Lower leg skin (tissue), 4 donors: ENCODE measurements at regions of chr6 and their contacts with region 1.

Region 1: DNA sequence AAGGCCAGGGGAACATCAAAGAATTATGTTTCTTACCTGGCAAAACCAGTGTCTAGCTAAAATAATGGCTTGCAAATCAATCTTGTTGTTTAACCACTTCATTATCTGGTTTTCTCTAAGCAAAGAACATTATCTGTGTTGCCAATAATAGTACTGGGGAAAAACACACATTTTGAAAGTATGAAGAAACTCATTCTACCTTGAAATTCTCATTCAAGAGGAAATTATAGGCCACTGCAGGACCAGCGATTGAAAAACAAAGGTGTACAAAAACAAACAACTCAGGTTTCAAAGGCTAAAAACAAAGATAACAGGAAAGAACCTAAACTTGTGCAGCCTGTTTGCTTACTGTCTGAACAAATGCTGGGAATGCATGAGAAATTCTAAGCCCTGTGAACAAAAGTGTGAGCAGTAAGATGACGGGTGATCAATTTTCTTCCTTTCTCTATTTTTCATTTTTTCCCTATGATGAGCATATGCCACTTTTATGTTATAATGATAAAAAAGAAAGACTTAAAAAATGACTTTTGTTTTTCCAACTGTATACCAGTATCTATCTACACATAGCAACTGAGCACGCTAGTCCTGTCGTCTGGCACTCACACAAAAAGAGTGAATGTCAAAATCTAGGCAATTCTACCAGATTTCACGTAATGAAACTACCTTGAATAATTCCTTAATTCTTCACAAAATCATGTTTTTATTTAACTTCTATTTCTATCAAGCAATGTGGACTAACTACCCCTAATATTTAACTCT is 117.9 kb downstream of the SGK1 start:
- DNase-seq: no peak
- H3K4me3 ChIP-seq: no peak overlapping the region
- CTCF ChIP-seq: no peak
- POLR2A ChIP-seq: no peak

Region 2: DNA sequence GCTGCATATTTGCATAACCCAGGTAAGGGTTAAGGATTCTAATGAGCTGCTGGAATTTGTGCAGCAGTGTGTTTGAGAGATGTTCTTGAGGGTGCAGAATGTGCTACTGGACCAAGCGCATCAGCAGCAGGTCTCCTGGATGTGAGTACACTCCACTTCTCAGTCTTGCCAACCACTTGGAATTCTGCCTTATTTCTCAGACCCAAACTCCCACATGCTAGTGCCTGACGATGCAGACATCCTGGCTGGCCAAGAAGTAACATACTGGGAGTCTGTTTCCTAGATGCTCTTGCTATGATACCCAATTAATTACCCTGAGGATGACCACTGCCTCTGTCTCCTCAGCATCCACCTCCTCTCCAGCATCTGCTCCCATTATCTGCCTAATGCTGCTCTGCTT is 1985.3 kb before region 1 on chr6:
- intact Hi-C with region 1: loop called (anchors 5 kb)
- DNase-seq: no peak
- H3K4me3 ChIP-seq: no peak overlapping the region
- CTCF ChIP-seq: no peak
- POLR2A ChIP-seq: no peak

Region 3: GRCh38 chr6:134537146-134537555 is 337.1 kb after region 1 on chr6:
- intact Hi-C with region 1: no loop called
- DNase-seq: no peak
- H3K4me3 ChIP-seq: no peak overlapping the region
- CTCF ChIP-seq: no peak
- POLR2A ChIP-seq: no peak

Region 4: DNA sequence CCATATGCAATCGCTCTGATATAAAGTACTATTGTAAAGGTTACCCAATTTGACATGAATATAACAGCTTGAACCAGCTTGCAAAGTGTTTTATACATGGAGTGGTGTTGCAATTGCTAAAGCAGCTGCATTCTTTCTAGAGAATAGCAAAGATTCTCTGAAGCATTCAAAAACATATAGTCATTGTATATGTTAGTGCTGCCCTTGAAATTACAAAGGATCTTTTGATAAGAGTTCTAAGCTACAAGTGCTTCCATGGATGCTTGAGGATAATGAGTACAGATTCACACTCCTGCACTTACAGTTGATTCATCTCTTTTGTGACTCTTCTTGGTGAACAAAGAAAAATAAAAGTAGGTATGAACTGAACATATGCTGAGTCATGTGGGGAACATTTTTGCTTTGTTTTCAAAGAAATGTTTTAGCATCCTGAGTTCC is 574.2 kb after region 1 on chr6:
- intact Hi-C with region 1: no loop called
- DNase-seq: no peak
- H3K4me3 ChIP-seq: no peak overlapping the region
- CTCF ChIP-seq: no peak
- POLR2A ChIP-seq: no peak